Calu3 (cell line): ENCODE measurements at regions of chr22 and their contacts with region 1.

Region 1: DNA sequence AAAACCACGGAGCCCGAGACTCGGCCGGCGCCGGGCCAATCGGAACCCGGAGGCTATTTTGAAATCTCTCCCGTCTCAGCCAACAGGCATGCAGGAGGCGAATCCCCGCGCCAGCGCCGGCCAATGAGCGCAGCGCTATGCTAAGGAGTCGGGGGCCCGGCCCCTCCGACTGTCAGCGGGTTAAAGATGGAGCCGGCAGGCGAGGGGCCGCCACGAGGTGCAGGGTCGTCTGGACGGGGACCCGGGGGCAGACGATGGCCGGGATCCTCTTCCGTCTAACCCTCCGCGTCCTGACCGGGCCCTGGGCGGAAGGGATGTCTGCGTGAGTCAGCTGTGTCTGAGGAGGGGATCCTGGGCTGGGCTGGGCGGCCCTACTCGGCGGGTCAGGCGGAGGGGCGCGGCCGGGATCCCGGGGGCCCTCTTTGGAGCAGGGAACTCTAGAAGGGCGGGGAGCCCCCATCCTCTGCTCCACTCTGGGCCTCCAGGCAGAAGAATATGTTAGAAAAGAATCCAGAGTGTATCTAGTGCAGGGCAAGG is 10.0 kb downstream of the SDF2L1 start:
- DNase-seq: peak; percentile 92
- H3K4me3 Mint-ChIP-seq: peak overlapping the region; percentile 98
- H3K27ac Mint-ChIP-seq: peak overlapping the region; percentile 91
- H3K4me1 Mint-ChIP-seq: peaks cover 26% of the 10 kb centered on the region
- H3K27me3 Mint-ChIP-seq: no peaks in the 10 kb centered on the region
- CTCF ChIP-seq: no peak

Region 2: DNA sequence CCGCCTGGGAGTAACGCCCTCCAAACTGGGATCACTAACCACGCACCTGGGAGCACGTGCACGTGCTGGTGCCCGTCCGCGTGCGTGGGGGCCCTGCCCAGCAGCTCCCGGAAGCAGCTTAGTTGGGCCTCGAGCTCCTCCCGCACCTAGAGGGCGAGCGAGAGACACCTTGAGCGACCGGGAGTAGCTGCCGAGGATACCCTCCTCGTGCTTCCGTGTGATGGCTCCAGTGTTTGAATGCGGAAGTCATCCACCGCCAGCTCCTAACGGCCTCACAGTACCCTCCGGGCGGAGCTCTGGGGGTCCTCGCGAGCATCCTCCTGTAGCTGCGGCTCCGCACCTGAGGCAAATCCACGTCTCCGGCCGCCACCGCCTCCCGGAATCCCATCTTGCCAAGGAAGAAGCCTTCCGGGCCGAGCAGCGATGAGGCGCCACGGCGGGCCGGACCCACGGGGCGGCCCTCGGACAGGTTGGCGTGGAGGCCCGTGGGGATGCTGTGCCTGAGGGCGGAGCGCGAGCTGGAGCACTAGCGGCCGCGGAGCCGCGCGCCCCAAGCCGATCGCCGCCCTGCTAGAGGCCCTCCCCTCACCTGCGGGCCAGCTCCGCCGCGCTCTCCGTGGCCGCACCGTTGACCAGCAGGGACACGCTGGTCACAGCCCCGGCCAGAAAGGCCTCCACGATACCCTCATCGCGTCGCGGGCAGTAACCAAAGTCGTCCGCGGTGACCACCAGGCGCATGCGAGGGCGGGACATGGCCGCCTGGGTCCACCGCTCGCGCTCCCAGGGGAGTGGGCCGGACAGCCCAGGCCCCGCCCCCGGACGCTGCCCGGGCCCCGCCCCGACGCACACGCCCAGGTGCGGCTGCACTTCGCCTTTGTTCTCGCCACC is 22.6 kb before region 1 on chr22 and contains the start of gene YDJC:
- CTCF ChIA-PET with region 1: interaction called, 11 read pairs
- intact Hi-C with region 1: loop called (anchors 1 kb)
- DNase-seq: peak; percentile 99
- H3K4me3 Mint-ChIP-seq: peak within 1 kb of the TSS; percentile 84
- H3K27ac Mint-ChIP-seq: peak within 1 kb of the TSS; percentile 71
- H3K4me1 Mint-ChIP-seq: peaks cover 20% of the 10 kb centered on the region
- H3K27me3 Mint-ChIP-seq: no peaks in the 10 kb centered on the region
- CTCF ChIP-seq: peak; percentile 69
- total RNA-seq, gene YDJC: 57.9 and 64.2 TPM in 2 replicates

Region 3: DNA sequence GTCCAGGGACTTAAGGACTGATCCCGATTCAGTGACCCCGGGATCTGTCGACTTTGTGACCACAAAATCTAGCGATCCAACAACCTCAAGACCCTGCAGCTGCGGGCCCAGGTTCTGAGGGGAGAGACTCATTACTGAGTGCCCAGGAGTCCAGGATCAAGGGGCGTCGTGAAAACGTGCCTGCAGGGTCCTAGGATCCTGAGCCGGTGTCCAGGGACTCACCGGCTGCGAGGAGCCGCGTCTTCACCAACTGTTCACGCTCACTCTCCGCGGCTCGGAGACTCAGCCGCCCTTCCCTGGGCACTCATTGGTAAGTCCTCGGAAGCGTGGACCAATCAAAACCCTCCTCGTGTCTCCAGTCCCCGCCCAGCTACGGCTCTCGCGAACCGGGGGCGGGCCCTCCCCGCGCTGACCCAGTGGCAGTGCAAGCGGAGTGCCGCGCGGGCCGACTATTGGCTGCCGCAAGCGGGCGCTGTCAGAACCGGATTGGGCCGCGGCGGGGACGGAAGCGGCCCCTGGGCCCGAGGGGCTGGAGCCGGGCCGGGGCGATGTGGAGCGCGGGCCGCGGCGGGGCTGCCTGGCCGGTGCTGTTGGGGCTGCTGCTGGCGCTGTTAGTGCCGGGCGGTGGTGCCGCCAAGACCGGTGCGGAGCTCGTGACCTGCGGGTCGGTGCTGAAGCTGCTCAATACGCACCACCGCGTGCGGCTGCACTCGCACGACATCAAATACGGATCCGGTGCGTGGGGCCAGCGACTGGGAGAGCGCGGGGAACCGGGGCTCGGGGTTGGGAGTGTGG is 10.1 kb before region 1 on chr22 and contains the start of gene SDF2L1:
- CTCF ChIA-PET with region 1: interaction called, 12 read pairs
- intact Hi-C with region 1: no loop called
- DNase-seq: peak; percentile 99
- H3K4me3 Mint-ChIP-seq: peak within 1 kb of the TSS; percentile 94
- H3K27ac Mint-ChIP-seq: peak within 1 kb of the TSS; percentile 98
- H3K4me1 Mint-ChIP-seq: peaks cover 34% of the 10 kb centered on the region
- H3K27me3 Mint-ChIP-seq: no peaks in the 10 kb centered on the region
- CTCF ChIP-seq: no peak
- total RNA-seq, gene SDF2L1: 87.0 and 88.2 TPM in 2 replicates